CD4-positive, alpha-beta T cell (primary cell): ENCODE measurements at regions of chr18 and their contacts with region 1.

Region 1: GRCh38 chr18:69958422-69958821 is 10.7 kb upstream of the CD226 start:
- DNase-seq: peak in 3 of 14 experiments; percentile 28 to 71 (median 66)
- ATAC-seq: no peak
- H3K4me3 ChIP-seq: no peak overlapping the region
- H3K4me3 Mint-ChIP-seq: no peak overlapping the region
- H3K27ac ChIP-seq: peak overlapping the region; percentile 25 to 75
- H3K27ac Mint-ChIP-seq: no peak overlapping the region
- H3K4me1 ChIP-seq: peaks cover 45% of the 10 kb centered on the region
- H3K4me1 Mint-ChIP-seq: peaks cover 16% of the 10 kb centered on the region
- H3K27me3 ChIP-seq: no peaks in the 10 kb centered on the region
- H3K27me3 Mint-ChIP-seq: no peaks in the 10 kb centered on the region
- CTCF ChIP-seq: no peak

Region 2: GRCh38 chr18:69659142-69659651 is 299.2 kb before region 1 on chr18:
- CTCF ChIA-PET with region 1: no interaction called
- POLR2A ChIA-PET with region 1: no interaction called
- intact Hi-C with region 1: no loop called
- DNase-seq: no peak
- ATAC-seq: no peak
- H3K4me3 ChIP-seq: no peak overlapping the region
- H3K4me3 Mint-ChIP-seq: no peak overlapping the region
- H3K27ac ChIP-seq: no peak overlapping the region
- H3K27ac Mint-ChIP-seq: no peak overlapping the region
- H3K4me1 ChIP-seq: no peaks in the 10 kb centered on the region
- H3K4me1 Mint-ChIP-seq: no peaks in the 10 kb centered on the region
- H3K27me3 ChIP-seq: no peaks in the 10 kb centered on the region
- H3K27me3 Mint-ChIP-seq: peaks cover 9% of the 10 kb centered on the region
- CTCF ChIP-seq: no peak

Region 3: DNA sequence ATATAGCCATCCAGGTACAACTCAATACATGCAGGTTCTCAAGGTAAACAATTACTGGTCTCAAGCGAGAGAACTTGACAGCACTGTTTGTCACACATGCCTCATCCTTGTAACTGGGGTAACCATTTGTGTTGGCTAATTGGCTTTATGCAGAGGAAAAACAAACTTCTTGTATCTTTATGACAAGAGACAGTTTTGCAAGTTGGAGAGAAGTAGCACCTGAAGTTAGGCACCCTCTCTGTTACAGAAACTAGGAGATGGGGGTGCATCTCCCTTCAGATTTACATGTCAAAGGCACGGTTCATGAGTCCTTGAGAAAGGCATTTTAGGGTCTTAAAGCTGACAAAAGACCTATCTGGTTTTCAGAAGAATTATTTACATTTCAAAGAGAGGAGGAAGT is 252.4 kb before region 1 on chr18:
- CTCF ChIA-PET with region 1: no interaction called
- POLR2A ChIA-PET with region 1: no interaction called
- intact Hi-C with region 1: no loop called
- DNase-seq: no peak
- ATAC-seq: no peak
- H3K4me3 ChIP-seq: no peak overlapping the region
- H3K4me3 Mint-ChIP-seq: no peak overlapping the region
- H3K27ac ChIP-seq: no peak overlapping the region
- H3K27ac Mint-ChIP-seq: no peak overlapping the region
- H3K4me1 ChIP-seq: no peaks in the 10 kb centered on the region
- H3K4me1 Mint-ChIP-seq: no peaks in the 10 kb centered on the region
- H3K27me3 ChIP-seq: no peaks in the 10 kb centered on the region
- H3K27me3 Mint-ChIP-seq: no peaks in the 10 kb centered on the region
- CTCF ChIP-seq: no peak

Region 4: GRCh38 chr18:69916412-69916811 is 42.0 kb before region 1 on chr18:
- CTCF ChIA-PET with region 1: interaction called, 3 read pairs
- POLR2A ChIA-PET with region 1: interaction called, 13 read pairs
- intact Hi-C with region 1: no loop called
- DNase-seq: no peak
- ATAC-seq: no peak
- H3K4me3 ChIP-seq: no peak overlapping the region
- H3K4me3 Mint-ChIP-seq: no peak overlapping the region
- H3K27ac ChIP-seq: no peak overlapping the region
- H3K27ac Mint-ChIP-seq: peak overlapping the region; percentile 61
- H3K4me1 ChIP-seq: peaks cover 21% of the 10 kb centered on the region
- H3K4me1 Mint-ChIP-seq: peaks cover 84% of the 10 kb centered on the region
- H3K27me3 ChIP-seq: no peaks in the 10 kb centered on the region
- H3K27me3 Mint-ChIP-seq: no peaks in the 10 kb centered on the region
- CTCF ChIP-seq: no peak

Region 5: GRCh38 chr18:69947361-69948133 is 10.9 kb before region 1 on chr18 and contains the start of gene CD226:
- CTCF ChIA-PET with region 1: interaction called, 10 read pairs
- POLR2A ChIA-PET with region 1: interaction called, 46 read pairs
- intact Hi-C with region 1: loop called in 1 of 2 experiments (anchors 1 kb)
- DNase-seq: peak in 6 of 14 experiments; percentile 17 to 78 (median 54)
- ATAC-seq: peak; percentile 75
- H3K4me3 ChIP-seq: peak within 1 kb of the TSS; percentile 57
- H3K4me3 Mint-ChIP-seq: no peak within 1 kb of the TSS
- H3K27ac ChIP-seq: peak within 1 kb of the TSS; percentile 58 to 70
- H3K27ac Mint-ChIP-seq: no peak within 1 kb of the TSS
- H3K4me1 ChIP-seq: peaks cover 66% of the 10 kb centered on the region
- H3K4me1 Mint-ChIP-seq: peaks cover 15% of the 10 kb centered on the region
- H3K27me3 ChIP-seq: no peaks in the 10 kb centered on the region
- H3K27me3 Mint-ChIP-seq: no peaks in the 10 kb centered on the region
- CTCF ChIP-seq: no peak
- total RNA-seq, gene CD226: 74.0 to 74.8 TPM

Region 6: GRCh38 chr18:70243131-70243530 is 284.7 kb after region 1 on chr18:
- CTCF ChIA-PET with region 1: no interaction called
- POLR2A ChIA-PET with region 1: no interaction called
- intact Hi-C with region 1: no loop called
- DNase-seq: no peak
- ATAC-seq: no peak
- H3K4me3 ChIP-seq: no peak overlapping the region
- H3K4me3 Mint-ChIP-seq: no peak overlapping the region
- H3K27ac ChIP-seq: no peak overlapping the region
- H3K27ac Mint-ChIP-seq: no peak overlapping the region
- H3K4me1 ChIP-seq: no peaks in the 10 kb centered on the region
- H3K4me1 Mint-ChIP-seq: no peaks in the 10 kb centered on the region
- H3K27me3 ChIP-seq: no peaks in the 10 kb centered on the region
- H3K27me3 Mint-ChIP-seq: peaks cover 23% of the 10 kb centered on the region
- CTCF ChIP-seq: no peak